A549 (cell line): ENCODE measurements at regions of chr9 and their contacts with region 1.

Region 1: GRCh38 chr9:133149126-133150107 is 14.3 kb downstream of the GBGT1 start:
- DNase-seq: peak; percentile 93 to 96
- ATAC-seq: peak; percentile 71 to 76
- H3K4me3 ChIP-seq: peak overlapping the region; percentile 77
- H3K27ac ChIP-seq: peak overlapping the region; percentile 88 to 96
- H3K4me1 ChIP-seq: peaks cover 25% of the 10 kb centered on the region
- CTCF ChIP-seq: peak; percentile 23; the same call in 2 of the 3 replicates
- EP300 ChIP-seq: no peak
- POLR2A ChIP-seq: peak; percentile 52
- RAD21 ChIP-seq: peak in 1 of 2 experiments; percentile 41; a peak in 3 of 5 replicates

Region 2: GRCh38 chr9:132877824-132878694 is 271.4 kb before region 1 on chr9 and contains the start of gene AK8:
- CTCF ChIA-PET with region 1: no interaction called
- POLR2A ChIA-PET with region 1: no interaction called
- DNase-seq: peak; percentile 78 to 81
- ATAC-seq: peak; percentile 77 to 89
- H3K4me3 ChIP-seq: peak within 1 kb of the TSS; percentile 97
- H3K27ac ChIP-seq: peak within 1 kb of the TSS; percentile 89 to 95
- H3K4me1 ChIP-seq: peaks cover 8% of the 10 kb centered on the region; the same call in 1 of the 3 replicates
- CTCF ChIP-seq: no peak
- EP300 ChIP-seq: no peak
- POLR2A ChIP-seq: peak; percentile 29; the same call in 1 of the 2 replicates
- RAD21 ChIP-seq: no peak
- polyA plus RNA-seq, gene AK8: 0.61 and 0.77 TPM in 2 replicates

Region 3: DNA sequence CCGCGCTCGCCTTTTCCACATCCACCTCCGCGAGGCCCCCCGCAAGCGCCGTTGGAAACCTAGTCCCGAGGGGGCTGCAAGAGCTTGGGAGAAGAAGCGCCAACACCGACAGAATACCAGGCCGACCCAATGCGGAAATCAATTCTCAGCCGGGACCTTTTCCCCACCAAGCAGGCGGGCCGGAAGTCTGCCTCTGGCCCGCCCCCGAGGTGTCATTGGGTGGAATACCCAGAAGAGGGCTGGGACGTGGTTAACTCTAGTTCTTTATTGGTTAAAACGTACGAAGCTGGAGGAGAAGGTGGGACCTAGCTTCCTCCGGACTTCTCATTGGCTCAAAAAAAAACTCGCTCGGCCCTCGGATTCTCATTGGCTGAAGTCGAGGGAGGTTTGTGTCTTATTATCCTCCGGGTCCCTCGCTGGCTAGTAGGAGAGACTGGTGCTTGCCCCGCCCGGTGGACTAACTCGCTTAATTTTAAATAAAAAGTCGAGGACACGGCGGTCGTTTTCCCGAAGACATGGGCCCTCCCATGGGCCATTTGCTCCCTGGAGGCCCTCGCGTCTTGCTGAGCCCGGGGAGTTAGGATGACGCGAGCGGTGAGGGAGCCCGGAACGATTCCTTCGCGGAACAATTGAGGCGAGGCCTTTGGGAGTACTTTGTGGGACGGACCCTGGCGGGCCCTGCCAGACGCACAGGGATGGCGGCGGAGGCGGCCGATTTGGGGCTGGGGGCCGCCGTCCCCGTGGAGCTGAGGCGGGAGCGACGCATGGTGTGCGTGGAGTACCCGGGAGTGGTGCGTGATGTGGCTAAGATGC is 118.9 kb before region 1 on chr9 and contains the start of gene GTF3C5:
- CTCF ChIA-PET with region 1: interaction called, 22 read pairs
- POLR2A ChIA-PET with region 1: interaction called, 25 read pairs
- DNase-seq: peak; percentile 99 to 100
- ATAC-seq: peak; percentile 98 to 99
- H3K4me3 ChIP-seq: peak within 1 kb of the TSS; percentile 67
- H3K27ac ChIP-seq: peak within 1 kb of the TSS; percentile 83 to 96
- H3K4me1 ChIP-seq: peaks cover 17% of the 10 kb centered on the region
- CTCF ChIP-seq: no peak
- EP300 ChIP-seq: no peak
- POLR2A ChIP-seq: peak; percentile 80
- RAD21 ChIP-seq: no peak
- polyA plus RNA-seq, gene GTF3C5: 57.2 and 57.4 TPM in 2 replicates

Region 4: DNA sequence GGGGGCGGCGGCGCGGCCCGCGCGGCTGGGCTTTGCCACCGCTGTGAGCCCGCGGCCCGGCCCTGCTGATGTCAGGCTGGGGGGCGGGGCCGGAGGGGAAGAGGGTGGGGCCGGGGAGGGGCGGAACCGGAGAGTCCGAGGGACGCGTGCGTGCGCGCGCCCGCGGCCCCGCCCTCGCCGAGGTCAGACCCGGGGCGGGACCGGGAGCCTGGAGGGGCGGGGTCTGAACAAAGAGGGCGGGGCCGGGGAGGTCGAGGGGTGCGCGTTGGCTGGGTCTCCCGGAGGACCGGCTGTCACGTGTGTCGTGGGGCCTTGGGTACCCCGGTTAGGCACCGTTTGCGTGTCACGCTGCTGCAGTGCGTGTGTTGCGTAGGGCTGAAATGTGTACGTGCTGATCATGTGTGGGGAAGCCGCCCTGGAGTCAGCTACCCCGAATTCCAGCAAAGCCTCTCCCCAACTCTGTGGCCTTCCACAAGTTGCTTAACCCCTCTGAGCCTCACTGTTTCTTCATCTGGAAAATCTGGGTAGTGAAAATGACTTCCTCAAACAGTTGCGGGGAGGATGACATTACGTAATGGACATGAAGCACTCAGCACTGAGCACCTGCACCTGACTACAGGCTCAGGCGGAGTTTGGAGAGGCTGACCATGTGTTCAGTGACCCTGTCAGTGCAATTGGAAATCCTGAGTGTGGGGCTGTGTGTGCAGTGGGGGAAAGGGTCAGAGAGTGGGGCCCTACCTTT is 28.0 kb before region 1 on chr9 and contains the start of gene RALGDS:
- CTCF ChIA-PET with region 1: interaction called, 1,284 read pairs
- POLR2A ChIA-PET with region 1: interaction called, 8 read pairs
- DNase-seq: peak; percentile 82 to 86
- ATAC-seq: peak; percentile 74 to 81
- H3K4me3 ChIP-seq: peak within 1 kb of the TSS; percentile 94
- H3K27ac ChIP-seq: peak within 1 kb of the TSS; percentile 80 to 95
- H3K4me1 ChIP-seq: peaks cover 20% of the 10 kb centered on the region
- CTCF ChIP-seq: no peak
- EP300 ChIP-seq: no peak
- POLR2A ChIP-seq: no peak
- RAD21 ChIP-seq: no peak
- polyA plus RNA-seq, gene RALGDS: 12.1 and 14.8 TPM in 2 replicates

Region 5: DNA sequence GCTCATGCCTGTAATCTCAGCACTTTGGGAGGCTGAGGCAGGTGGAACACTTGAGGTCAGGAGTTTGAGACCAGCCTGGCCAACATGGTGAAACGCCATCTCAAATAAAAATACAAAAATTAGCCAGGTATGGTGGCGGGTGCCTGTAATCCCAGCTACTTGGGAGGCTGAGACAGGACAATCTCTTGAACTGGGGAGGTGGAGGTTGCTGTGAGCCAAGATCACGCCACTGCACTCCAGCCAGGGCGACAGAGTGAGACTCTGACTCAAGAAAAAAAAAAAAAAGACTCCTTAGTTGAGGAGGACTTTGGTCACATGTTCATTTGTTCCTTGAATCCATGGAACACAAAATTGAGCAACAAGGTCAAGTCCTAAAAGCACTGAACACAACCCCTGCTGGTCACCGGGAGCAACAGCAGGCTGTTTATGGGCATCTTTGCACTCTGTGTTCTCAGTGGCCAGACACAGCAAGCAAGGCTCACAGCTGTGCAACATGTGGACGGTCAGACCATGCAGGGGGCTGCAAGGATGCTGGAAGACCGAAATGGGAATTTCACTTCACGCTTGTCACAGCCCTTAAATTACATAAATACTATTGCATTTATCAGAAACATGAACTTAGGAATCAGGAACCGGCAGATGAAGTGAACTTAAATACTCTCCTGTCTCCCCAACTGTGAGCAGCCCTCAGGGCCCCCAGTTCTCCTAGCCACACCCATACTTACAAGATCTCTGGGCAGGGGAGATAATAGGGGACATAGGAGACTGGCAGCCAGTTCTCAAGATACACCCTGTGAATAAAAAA is 11.5 kb after region 1 on chr9:
- CTCF ChIA-PET with region 1: interaction called, 34 read pairs
- POLR2A ChIA-PET with region 1: interaction called, 7 read pairs
- DNase-seq: peak; percentile 83 to 94
- ATAC-seq: peak; percentile 81 to 84
- H3K4me3 ChIP-seq: no peak overlapping the region
- H3K27ac ChIP-seq: no peak overlapping the region
- H3K4me1 ChIP-seq: peaks cover 21% of the 10 kb centered on the region
- CTCF ChIP-seq: peak; percentile 47
- EP300 ChIP-seq: no peak
- POLR2A ChIP-seq: no peak
- RAD21 ChIP-seq: peak in 1 of 2 experiments; percentile 33; a peak in 1 of 5 replicates